PC-3 (cell line): ENCODE measurements at regions of chr10 and their contacts with region 1.

Region 1: GRCh38 chr10:73997787-73998622 is at the start of gene VCL:
- DNase-seq: peak; percentile 100
- ATAC-seq: peak; percentile 83
- H3K4me3 ChIP-seq: peak within 1 kb of the TSS; percentile 73
- H3K27ac ChIP-seq: peak within 1 kb of the TSS; percentile 66
- H3K4me1 ChIP-seq: peaks cover 32% of the 10 kb centered on the region
- H3K27me3 ChIP-seq: no peaks in the 10 kb centered on the region
- CTCF ChIP-seq: no peak
- total RNA-seq, gene VCL: 382 and 445 TPM in 2 replicates

Region 2: GRCh38 chr10:72435570-72435969 is 1562.4 kb before region 1 on chr10:
- CTCF ChIA-PET with region 1: no interaction called
- POLR2A ChIA-PET with region 1: no interaction called
- intact Hi-C with region 1: no loop called
- DNase-seq: no peak
- ATAC-seq: no peak
- H3K4me3 ChIP-seq: no peak overlapping the region
- H3K27ac ChIP-seq: no peak overlapping the region
- H3K4me1 ChIP-seq: no peaks in the 10 kb centered on the region
- H3K27me3 ChIP-seq: no peaks in the 10 kb centered on the region
- CTCF ChIP-seq: no peak

Region 3: GRCh38 chr10:73908853-73909538 is 89.0 kb before region 1 on chr10:
- CTCF ChIA-PET with region 1: no interaction called
- POLR2A ChIA-PET with region 1: interaction called, 3 read pairs
- intact Hi-C with region 1: loop called (anchors 1 kb)
- DNase-seq: peak; percentile 100
- ATAC-seq: peak; percentile 37
- H3K4me3 ChIP-seq: peak overlapping the region; percentile 68
- H3K27ac ChIP-seq: peak overlapping the region; percentile 78
- H3K4me1 ChIP-seq: peaks cover 88% of the 10 kb centered on the region
- H3K27me3 ChIP-seq: no peaks in the 10 kb centered on the region
- CTCF ChIP-seq: no peak

Region 4: GRCh38 chr10:74008212-74008731 is 10.3 kb after region 1 on chr10:
- CTCF ChIA-PET with region 1: interaction called, 6 read pairs
- POLR2A ChIA-PET with region 1: interaction called, 23 read pairs
- intact Hi-C with region 1: loop called (anchors 1 kb)
- DNase-seq: peak; percentile 98
- ATAC-seq: peak; percentile 80
- H3K4me3 ChIP-seq: peak overlapping the region; percentile 1; the same call in 1 of the 2 replicates
- H3K27ac ChIP-seq: peak overlapping the region; percentile 54
- H3K4me1 ChIP-seq: peaks cover 68% of the 10 kb centered on the region
- H3K27me3 ChIP-seq: no peaks in the 10 kb centered on the region
- CTCF ChIP-seq: 0 out of 2 replicates have a peak, but pooled peaks have one; percentile 17

Region 5: GRCh38 chr10:74058658-74059057 is 60.7 kb after region 1 on chr10:
- CTCF ChIA-PET with region 1: interaction called, 7 read pairs
- POLR2A ChIA-PET with region 1: interaction called, 23 read pairs
- intact Hi-C with region 1: loop called (anchors 1 kb)
- DNase-seq: peak; percentile 77
- ATAC-seq: no peak
- H3K4me3 ChIP-seq: no peak overlapping the region; the same call in 1 of the 2 replicates
- H3K27ac ChIP-seq: peak overlapping the region; percentile 71
- H3K4me1 ChIP-seq: peaks cover 55% of the 10 kb centered on the region
- H3K27me3 ChIP-seq: no peaks in the 10 kb centered on the region
- CTCF ChIP-seq: peak; percentile 75

Region 6: GRCh38 chr10:74189999-74190421 is 192.0 kb after region 1 on chr10:
- CTCF ChIA-PET with region 1: no interaction called
- POLR2A ChIA-PET with region 1: no interaction called
- intact Hi-C with region 1: loop called (anchors 5 kb)
- DNase-seq: peak; percentile 100
- ATAC-seq: peak; percentile 90
- H3K4me3 ChIP-seq: peak overlapping the region; percentile 58
- H3K27ac ChIP-seq: peak overlapping the region; percentile 75
- H3K4me1 ChIP-seq: peaks cover 81% of the 10 kb centered on the region
- H3K27me3 ChIP-seq: no peaks in the 10 kb centered on the region
- CTCF ChIP-seq: no peak